ENCODE measurements at regions of chr2 and their contacts with region 1.

Region 1: GRCh38 chr2:233449081-233449901 is 95.0 kb downstream of the DGKD start:
- DNase-seq: peak; percentile 50
- H3K4me3 ChIP-seq: no peak overlapping the region
- H3K27ac ChIP-seq: no peak overlapping the region
- H3K4me1 ChIP-seq: no peaks in the 10 kb centered on the region
- H3K27me3 ChIP-seq: no peaks in the 10 kb centered on the region
- CTCF ChIP-seq: peak; percentile 76 to 80
- POLR2A ChIP-seq: no peak

Region 2: DNA sequence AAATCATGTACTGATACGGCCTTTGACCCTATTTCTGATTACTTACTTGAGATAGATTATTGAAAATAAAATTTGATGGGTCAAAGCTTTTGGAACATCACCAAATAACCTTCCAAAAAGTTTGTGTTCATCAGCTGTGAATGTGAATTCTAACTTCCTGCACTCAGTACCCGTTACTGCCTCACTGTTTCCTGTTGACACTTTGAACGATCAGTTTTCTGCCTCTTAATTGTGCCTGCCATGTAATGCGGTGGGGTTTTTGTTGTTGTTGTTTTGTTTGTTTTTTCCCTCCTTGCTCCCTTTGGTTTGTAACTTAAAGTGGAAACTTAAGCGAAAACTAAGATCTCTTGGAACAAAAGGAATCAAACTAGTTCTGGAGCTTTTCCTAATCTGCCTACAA is 178.9 kb before region 1 on chr2:
- CTCF ChIA-PET with region 1: no interaction called
- POLR2A ChIA-PET with region 1: no interaction called
- dilution Hi-C with region 1: no loop called
- intact Hi-C with region 1: loop called (anchors 5 kb)
- DNase-seq: peak; percentile 44
- H3K4me3 ChIP-seq: no peak overlapping the region
- H3K27ac ChIP-seq: peak overlapping the region; percentile 22
- H3K4me1 ChIP-seq: peaks cover 8% of the 10 kb centered on the region
- H3K27me3 ChIP-seq: no peaks in the 10 kb centered on the region
- CTCF ChIP-seq: no peak
- POLR2A ChIP-seq: no peak

Region 3: GRCh38 chr2:233566141-233566960 is 117.1 kb after region 1 on chr2 and contains the start of gene USP40:
- CTCF ChIA-PET with region 1: interaction called, 5 read pairs
- POLR2A ChIA-PET with region 1: no interaction called
- dilution Hi-C with region 1: no loop called
- intact Hi-C with region 1: loop called (anchors 2 kb)
- DNase-seq: peak; percentile 92
- H3K4me3 ChIP-seq: peak within 1 kb of the TSS; percentile 59 to 98 (median 93)
- H3K27ac ChIP-seq: peak within 1 kb of the TSS; percentile 98
- H3K4me1 ChIP-seq: peaks cover 6% of the 10 kb centered on the region
- H3K27me3 ChIP-seq: peaks cover 0 to 2% of the 10 kb centered on the region in 2 experiments
- CTCF ChIP-seq: no peak
- POLR2A ChIP-seq: peak; percentile 98
- total RNA-seq, gene USP40: 32.5 and 36.5 TPM in 2 replicates

Region 4: DNA sequence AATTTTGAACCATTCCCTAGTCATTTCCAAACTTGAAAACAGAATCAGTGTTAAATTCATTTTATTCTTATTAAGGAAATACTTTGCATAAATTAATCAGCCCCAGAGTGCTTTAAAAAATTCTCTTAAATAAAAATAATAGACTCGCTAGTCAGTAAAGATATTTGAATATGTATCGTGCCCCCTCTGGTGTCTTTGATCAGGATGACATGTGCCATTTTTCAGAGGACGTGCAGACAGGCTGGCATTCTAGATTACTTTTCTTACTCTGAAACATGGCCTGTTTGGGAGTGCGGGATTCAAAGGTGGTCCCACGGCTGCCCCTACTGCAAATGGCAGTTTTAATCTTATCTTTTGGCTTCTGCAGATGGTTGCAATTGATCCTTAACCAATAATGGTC is 323.3 kb after region 1 on chr2:
- CTCF ChIA-PET with region 1: no interaction called
- POLR2A ChIA-PET with region 1: no interaction called
- dilution Hi-C with region 1: no loop called
- intact Hi-C with region 1: loop called (anchors 2 kb)
- DNase-seq: no peak
- H3K4me3 ChIP-seq: no peak overlapping the region
- H3K27ac ChIP-seq: no peak overlapping the region
- H3K4me1 ChIP-seq: no peaks in the 10 kb centered on the region
- H3K27me3 ChIP-seq: no peaks in the 10 kb centered on the region
- CTCF ChIP-seq: no peak
- POLR2A ChIP-seq: no peak

Region 5: GRCh38 chr2:233854241-233854981 is 405.1 kb after region 1 on chr2 and contains the start of gene HJURP:
- CTCF ChIA-PET with region 1: interaction called, 6 read pairs
- POLR2A ChIA-PET with region 1: no interaction called
- dilution Hi-C with region 1: no loop called
- intact Hi-C with region 1: loop called (anchors 2 kb)
- DNase-seq: peak; percentile 98
- H3K4me3 ChIP-seq: peak within 1 kb of the TSS; percentile 88 to 98 (median 89)
- H3K27ac ChIP-seq: peak within 1 kb of the TSS; percentile 73
- H3K4me1 ChIP-seq: peaks cover 20% of the 10 kb centered on the region
- H3K27me3 ChIP-seq: no peaks in the 10 kb centered on the region
- CTCF ChIP-seq: no peak
- POLR2A ChIP-seq: peak; percentile 68
- total RNA-seq, gene HJURP: 42.4 and 60.9 TPM in 2 replicates

Measured in endothelial cell of umbilical vein (primary cell).